ENCODE measurements at regions of chr15 and their contacts with region 1.

Region 1: GRCh38 chr15:51162865-51163762 is 68.4 kb upstream of the TNFAIP8L3 start:
- H3K4me3 Mint-ChIP-seq: no peak overlapping the region
- H3K27ac Mint-ChIP-seq: no peak overlapping the region
- H3K4me1 Mint-ChIP-seq: peaks cover 20% of the 10 kb centered on the region
- H3K27me3 Mint-ChIP-seq: peaks cover 2% of the 10 kb centered on the region

Region 2: GRCh38 chr15:51192521-51193280 is 29.6 kb after region 1 on chr15:
- intact Hi-C with region 1: loop called (anchors 1 kb)
- H3K4me3 Mint-ChIP-seq: no peak overlapping the region
- H3K27ac Mint-ChIP-seq: no peak overlapping the region
- H3K4me1 Mint-ChIP-seq: peaks cover 46% of the 10 kb centered on the region
- H3K27me3 Mint-ChIP-seq: peaks cover 28% of the 10 kb centered on the region

Region 3: DNA sequence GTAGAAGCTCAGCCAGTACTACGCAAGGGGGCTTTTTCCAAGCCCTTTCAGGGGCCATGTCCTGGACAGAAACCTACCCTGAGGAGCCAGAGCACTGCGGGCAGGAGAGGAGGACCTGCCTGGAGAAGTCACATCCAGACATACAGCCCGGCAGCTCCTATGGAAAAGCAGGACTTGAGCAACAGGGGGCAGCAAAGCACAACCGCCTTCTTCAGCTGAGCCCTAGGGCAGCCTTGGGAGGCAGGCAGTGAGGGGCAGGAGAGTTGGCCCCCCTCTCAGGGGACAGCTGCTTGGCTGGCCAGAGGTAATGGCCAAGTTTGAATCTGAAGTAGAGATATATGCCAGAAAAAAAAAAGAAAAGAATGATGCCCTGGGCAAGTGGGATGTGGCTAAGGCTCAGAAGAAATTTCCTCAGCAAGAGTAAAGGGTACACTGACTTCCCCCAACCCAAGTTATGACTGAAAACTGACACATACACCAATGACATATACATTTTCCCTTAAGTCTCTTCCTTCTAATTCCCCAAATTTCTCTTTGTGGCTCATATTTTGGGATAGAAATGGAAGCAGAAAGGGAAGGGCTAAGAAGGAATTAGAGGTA is 118.4 kb after region 1 on chr15:
- intact Hi-C with region 1: loop called (anchors 2 kb)
- H3K4me3 Mint-ChIP-seq: no peak overlapping the region
- H3K27ac Mint-ChIP-seq: no peak overlapping the region
- H3K4me1 Mint-ChIP-seq: peaks cover 10% of the 10 kb centered on the region
- H3K27me3 Mint-ChIP-seq: peaks cover 8% of the 10 kb centered on the region

Region 4: DNA sequence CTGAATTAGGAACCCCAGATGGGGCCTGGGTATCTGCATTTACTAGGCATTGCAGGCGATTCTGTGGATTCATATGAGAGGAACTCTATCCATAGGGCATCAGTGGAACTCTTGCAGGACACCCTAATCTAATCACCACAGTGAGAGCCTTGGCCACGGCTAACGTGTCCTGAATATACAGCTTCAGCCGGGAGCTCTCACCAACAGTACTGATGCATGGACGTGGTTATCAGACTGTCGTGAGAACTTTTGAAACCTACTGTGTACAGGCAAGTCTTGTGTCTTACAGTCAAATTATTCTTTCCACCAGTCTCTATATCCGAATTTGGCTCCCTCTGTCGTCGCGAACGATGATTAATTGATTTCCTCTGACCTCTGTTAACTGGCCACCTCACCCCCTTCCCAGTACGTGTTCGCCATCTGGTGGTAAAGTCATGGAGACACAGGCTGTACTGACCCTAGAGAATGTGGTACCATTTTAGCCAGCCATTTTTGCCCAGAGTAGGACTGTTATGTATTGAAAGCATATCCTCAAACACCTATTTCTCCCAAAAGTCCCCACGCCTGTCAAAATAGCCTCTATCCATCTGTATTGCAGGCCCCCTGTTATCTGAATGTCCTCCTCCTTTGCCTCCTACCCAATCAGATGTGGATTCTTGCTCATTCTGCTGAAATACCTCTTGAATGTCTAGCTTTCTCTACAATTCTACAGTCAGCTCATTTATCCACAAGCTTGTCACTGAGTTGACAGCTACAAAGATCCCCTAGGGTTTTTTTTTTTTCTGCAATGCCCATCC is 218.1 kb after region 1 on chr15:
- intact Hi-C with region 1: loop called (anchors 1 kb)
- H3K4me3 Mint-ChIP-seq: no peak overlapping the region
- H3K27ac Mint-ChIP-seq: no peak overlapping the region
- H3K4me1 Mint-ChIP-seq: peaks cover 12% of the 10 kb centered on the region
- H3K27me3 Mint-ChIP-seq: peaks cover 24% of the 10 kb centered on the region

Region 5: GRCh38 chr15:51401872-51402517 is 238.9 kb after region 1 on chr15:
- intact Hi-C with region 1: loop called (anchors 5 kb)
- H3K4me3 Mint-ChIP-seq: no peak overlapping the region
- H3K27ac Mint-ChIP-seq: no peak overlapping the region
- H3K4me1 Mint-ChIP-seq: peaks cover 20% of the 10 kb centered on the region
- H3K27me3 Mint-ChIP-seq: peaks cover 35% of the 10 kb centered on the region

Region 6: DNA sequence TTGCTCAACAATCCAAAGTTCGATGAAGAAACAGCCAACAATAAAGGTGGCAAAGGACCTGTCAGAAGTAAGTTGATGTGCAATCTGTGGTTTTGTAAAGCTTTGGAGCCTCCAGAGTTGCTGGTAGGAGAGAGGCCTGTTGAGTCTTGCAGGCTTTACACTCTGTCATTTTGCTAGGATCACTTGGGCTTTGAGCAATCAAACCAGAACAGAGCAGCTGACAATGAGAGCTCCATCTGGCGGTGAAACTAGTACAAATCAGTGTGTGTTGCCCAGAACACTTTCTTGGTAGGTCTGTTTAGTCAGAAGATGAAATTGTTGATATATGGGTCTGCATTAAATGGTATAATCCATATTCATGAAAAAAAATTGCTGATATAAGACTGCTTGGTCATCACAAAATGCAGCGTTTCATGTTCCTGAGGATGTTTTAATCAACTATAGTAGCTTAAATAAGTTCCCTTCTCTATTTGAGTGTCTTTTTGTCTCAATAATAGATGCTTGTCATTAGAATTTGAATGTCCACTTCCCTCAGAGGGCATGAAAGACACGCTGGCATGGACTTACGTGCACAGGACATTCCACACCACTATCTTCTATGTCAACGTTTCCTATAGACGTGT is 613.9 kb after region 1 on chr15:
- intact Hi-C with region 1: no loop called
- H3K4me3 Mint-ChIP-seq: no peak overlapping the region
- H3K27ac Mint-ChIP-seq: no peak overlapping the region
- H3K4me1 Mint-ChIP-seq: peaks cover 15% of the 10 kb centered on the region
- H3K27me3 Mint-ChIP-seq: no peaks in the 10 kb centered on the region

Measured in dendritic cell treated with granulocyte-macrophage colony-stimulating factor and Interleukin-4, amounts not matched to agents 40 ng/mL and 50 ng/mL, for 4 days (primary cell).